Kidney (tissue), 22 donors: ENCODE measurements at regions of chr1 and their contacts with region 1.

Region 1: DNA sequence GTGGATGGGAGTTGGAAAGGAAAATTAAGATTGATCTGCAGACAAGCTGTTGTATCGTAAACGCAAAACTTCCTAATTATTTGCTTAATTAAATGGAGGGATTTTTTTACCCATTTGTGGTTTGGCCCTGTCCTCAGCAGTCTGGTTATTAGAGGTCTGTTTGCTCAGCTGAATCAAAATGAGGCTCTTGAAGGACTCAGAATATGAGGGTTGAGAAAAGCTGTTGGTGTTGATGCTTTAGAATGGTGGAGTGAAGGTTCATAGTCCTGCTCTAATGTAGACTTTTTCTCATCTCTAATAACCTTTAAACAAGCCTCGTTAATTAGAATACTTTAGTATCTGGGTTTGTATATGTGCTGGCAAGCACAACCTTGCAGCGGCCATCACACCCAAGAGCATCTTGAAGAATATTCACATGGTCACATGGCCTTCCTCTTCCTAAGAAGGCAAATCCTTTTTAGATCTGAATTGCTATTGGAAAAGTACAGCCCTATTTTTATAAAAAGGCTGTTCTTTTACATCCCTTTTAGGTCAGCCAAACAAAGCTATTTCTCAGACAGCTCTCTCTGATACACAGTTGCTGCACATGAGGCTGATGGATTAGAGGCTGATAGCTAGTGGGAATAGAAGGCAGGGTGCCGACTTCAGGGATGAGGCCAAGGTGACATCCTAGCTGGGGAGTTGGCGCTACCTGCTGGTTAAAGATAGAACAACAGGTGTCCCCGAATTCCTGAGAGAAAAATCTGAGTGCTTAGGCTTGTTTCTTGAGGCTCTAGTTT is 53.8 kb downstream of the MACF1 start:
- DNase-seq: peak in 4 of 5 donors; percentile 63 to 80 (median 76)
- H3K4me3 ChIP-seq: no peak overlapping the region
- H3K27ac ChIP-seq: no peak overlapping the region
- H3K4me1 ChIP-seq: no peaks in the 10 kb centered on the region
- H3K27me3 ChIP-seq: no peaks in the 10 kb centered on the region
- CTCF ChIP-seq: peak; percentile 94

Region 2: GRCh38 chr1:39102537-39103327 is 155.6 kb before region 1 on chr1:
- intact Hi-C with region 1: loop called (anchors 5 kb)
- DNase-seq: peak in 4 of 5 donors; percentile 52 to 94 (median 74)
- H3K4me3 ChIP-seq: no peak overlapping the region
- H3K27ac ChIP-seq: no peak overlapping the region
- H3K4me1 ChIP-seq: peaks cover 19 to 27% (median 23%) of the 10 kb centered on the region in 3 donors
- H3K27me3 ChIP-seq: no peaks in the 10 kb centered on the region
- CTCF ChIP-seq: peak; percentile 91